Cardiac septum (tissue), 1 donor: ENCODE measurements at regions of chr5 and their contacts with region 1.

Region 1: DNA sequence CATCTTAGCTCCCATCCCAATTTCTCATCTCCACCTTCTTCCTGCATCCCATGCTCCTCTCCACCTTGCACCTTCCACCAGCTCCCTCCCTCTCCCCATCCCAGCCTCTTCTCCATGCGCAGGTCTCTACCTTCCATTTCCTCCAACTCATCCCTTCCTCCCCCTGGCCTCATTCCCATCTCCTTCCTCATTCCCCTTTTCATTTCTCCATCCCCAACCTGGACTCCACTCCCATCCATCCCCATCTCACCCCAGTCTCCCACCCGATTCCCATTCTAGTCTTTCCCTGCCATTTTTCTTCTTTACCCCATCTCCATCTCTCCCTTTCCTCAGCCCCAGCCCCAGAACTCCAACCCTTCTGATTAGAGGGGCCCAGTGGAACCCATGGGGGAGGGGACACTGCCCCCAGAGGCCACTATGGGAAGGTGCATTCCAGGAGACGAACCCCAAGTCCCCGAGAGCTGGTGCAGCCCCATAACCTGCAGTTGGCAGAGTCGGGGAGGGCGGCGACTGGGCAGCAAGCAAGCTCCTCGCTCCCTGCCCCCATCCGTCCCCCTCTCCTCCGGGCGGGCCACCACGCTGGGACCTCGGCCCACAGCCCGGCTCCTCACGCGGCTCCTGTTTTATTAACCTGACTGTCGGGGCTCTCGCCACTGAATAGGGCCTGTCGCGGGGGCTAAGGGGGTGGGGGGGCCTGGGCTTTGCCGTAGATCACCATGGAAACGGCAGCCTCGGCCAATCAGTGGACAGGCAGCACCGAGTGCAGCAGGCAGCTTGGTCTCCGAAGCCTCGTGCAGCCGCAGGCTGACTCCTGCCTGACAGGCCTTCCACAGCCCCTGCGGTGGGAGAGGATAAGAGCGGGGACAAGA is 66.7 kb downstream of the PCDH1 start:
- DNase-seq: no peak

Region 2: DNA sequence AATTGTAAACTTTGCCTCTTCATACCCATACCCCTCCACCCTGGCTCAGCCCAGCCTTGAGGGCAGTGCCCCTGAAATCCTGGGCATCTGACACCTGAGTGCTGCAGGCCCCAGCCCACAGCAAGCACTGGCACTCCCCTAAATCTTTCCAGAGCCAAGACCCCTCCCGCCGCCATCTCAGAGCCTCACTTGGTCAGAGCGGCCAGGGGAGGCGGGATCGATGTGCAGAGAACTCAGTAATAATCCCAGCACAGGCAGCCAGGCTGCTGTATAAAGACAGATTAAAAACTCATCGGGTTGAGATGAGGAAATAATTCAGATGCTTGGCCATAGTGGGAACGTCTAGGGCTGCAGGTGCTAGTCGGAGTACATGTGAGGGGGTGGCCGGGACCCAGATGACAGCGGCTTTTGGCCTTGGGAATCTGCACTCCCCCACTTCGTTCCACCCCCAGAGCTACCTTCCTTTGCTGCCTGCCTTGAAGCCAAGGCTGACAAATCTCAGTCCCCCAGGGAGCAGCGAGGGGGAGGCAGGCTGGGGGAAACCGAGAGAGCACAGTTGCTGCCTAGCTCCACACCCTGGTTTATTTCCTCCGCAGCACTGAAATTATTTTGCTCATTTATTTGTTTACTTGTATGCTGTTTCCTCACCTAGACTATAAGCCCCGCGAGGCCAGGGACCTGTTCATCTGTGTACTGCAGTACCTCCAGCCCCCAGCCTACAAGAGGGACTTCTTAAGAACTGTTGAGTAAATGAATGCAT is 110.0 kb before region 1 on chr5:
- intact Hi-C with region 1: loop called (anchors 5 kb)
- DNase-seq: no peak

Region 3: DNA sequence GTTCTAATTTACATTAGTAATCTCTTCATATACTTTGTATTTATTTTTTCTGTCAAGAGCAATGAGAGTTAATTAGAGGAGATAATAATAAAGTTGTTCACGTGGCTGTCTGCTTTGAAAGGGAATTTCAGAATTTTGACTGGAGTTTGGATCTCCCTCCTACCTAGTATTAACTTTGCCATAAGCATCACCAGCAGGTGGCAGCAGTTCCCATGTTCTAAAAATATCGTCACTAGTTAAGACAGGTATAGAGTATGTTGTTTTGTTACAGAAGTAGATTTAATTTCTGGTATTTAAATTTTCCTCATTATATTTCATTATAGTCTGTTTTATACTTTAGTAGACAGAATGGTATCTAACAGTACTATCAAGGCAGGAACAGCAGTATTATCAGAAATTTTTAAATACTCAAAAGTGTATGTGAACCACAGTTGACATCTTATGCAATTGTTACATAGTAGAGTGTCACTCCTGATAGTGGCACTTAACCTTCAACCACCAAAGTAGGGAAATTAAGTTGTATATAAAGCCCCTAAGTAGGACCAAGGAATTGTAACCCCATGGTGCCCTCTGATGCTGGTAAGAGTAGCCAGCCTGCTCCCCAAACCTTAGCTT is 180.9 kb after region 1 on chr5:
- intact Hi-C with region 1: no loop called
- DNase-seq: no peak

Region 4: DNA sequence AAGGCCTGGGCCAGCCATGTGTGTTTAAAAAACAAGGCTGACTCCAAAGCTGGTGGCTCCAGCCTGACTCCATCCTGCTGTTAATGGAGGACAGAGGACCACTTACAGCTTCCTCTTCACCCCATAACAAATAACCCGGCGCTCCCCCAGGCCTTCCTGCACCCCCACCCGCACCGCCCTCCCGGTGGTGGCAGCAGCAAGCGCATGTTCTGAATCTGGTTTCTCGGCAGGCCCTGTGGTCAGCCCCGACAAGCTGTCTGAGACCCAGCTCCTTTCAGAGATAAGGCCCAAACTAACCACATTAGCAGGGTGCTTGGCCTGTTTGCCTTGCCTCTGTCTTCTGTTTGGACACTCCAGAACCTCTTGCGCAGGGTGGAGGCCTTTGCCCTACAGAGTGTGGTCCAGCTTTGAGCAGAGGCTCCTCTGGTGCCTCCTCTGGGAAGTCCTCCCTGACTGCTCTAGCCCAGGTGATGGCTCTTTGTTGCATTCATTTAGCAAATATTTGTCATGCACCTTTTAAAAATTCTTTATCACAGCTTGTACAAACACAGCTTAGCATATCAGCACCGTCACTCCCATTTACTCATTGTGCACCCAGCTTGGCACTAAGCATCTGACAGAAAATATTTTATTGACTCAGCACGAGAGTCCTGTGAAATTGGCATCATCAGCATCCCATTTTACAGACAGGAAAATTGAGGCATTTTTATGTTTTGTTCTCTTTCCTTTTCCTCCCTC is 375.5 kb after region 1 on chr5:
- intact Hi-C with region 1: no loop called
- DNase-seq: no peak